Activated CD8-positive, alpha-beta memory T cell treated with anti-CD3 and anti-CD28 coated beads, Interleukin-2, amount 10 ng/mL, durations not matched to agents 7 days and 5 days (primary cell): ENCODE measurements at regions of chr9 and their contacts with region 1.

Region 1: DNA sequence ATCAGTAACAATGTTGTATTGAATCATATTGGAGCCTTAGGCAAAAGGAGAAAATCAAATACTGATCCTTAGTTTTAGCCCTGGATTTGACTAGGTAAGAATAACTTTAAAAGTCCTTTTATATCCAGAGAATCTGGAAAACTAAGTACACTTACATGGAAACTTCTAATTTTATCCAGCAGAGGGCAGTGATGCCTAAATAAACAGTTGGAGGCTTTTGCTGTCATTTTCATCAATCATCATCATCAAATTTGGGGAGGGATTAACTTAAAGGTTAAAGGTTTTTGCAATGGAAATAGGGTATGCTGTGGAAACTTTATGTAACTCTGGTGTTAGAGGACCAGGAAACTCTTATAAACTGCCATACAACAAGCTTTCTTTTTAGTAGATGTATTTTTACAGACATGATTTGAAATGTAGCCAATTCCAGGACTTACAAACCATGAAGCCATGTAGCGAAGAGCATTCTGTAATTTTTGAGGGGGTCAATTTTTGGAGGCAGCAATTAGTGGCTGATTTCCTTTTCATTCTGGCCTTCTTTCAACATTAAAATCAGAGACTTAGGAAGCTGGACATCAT is 112.7 kb downstream of the OSTF1 start:
- DNase-seq: no peak
- ATAC-seq: no peak
- H3K4me3 Mint-ChIP-seq: no peak overlapping the region
- H3K27ac Mint-ChIP-seq: no peak overlapping the region
- H3K4me1 Mint-ChIP-seq: no peaks in the 10 kb centered on the region
- H3K27me3 Mint-ChIP-seq: no peaks in the 10 kb centered on the region

Region 2: GRCh38 chr9:75088260-75088905 is 112.6 kb before region 1 on chr9 and contains the start of gene OSTF1:
- CTCF ChIA-PET with region 1: no interaction called
- DNase-seq: peak; percentile 95
- ATAC-seq: peak; percentile 89
- H3K4me3 Mint-ChIP-seq: peak within 1 kb of the TSS; percentile 93
- H3K27ac Mint-ChIP-seq: peak within 1 kb of the TSS; percentile 97
- H3K4me1 Mint-ChIP-seq: peaks cover 61% of the 10 kb centered on the region
- H3K27me3 Mint-ChIP-seq: no peaks in the 10 kb centered on the region
- total RNA-seq, gene OSTF1: 149 to 198 TPM

Region 3: DNA sequence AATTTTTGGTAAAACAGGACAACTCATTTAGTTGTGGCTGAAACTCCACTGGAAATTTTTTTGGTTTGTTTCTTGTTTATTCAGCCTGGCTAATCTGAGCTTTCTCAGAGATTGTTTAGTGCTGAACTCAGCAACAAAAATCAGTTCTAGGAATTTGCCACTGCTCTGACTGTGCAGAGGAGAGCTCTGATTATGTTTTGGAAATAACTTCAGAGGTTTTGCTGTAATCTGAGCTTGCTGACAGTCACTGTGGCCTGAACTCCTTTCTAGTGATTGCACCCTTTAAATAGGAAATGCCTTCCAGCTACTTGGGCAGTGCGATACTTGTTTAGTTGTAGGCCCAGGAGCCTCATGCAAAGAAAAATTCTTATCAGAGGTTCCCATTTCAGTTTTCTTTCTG is 52.4 kb before region 1 on chr9:
- CTCF ChIA-PET with region 1: no interaction called
- DNase-seq: peak; percentile 70
- ATAC-seq: peak; percentile 57
- H3K4me3 Mint-ChIP-seq: peak overlapping the region; percentile 43
- H3K27ac Mint-ChIP-seq: peak overlapping the region; percentile 94
- H3K4me1 Mint-ChIP-seq: peaks cover 88% of the 10 kb centered on the region
- H3K27me3 Mint-ChIP-seq: no peaks in the 10 kb centered on the region

Region 4: DNA sequence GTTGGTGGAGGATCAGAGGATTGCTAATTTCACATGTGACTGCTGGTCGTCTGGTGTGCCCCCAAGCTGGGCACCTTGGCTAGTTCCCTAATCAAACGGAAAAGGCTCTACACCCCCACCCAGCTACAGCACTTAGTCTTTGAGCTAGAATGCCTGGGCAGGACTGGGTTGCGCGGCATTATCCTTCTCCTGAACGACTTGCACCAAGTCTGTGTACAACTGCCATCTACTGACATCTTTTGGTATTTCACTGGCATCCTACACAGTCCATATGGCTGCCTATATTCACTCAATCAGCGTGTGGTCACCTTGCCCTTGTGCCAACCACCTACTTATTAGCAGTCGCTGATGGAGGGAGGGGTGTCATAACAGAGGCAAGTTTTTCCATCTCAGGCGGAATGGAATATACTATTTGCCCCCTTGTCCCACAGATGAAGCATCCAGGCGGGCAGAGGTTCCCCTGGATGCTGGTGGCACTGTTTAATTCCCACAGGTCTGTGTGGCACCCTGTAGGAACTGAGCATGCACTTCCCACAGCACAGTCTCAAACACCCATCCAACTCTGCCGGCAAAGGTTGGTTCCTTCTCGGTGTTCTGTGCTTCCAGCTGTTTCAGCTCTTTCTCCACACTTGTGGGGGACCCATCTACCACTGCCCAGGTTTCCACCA is 37.5 kb after region 1 on chr9:
- CTCF ChIA-PET with region 1: interaction called, 13 read pairs
- DNase-seq: peak; percentile 67
- ATAC-seq: peak; percentile 96
- H3K4me3 Mint-ChIP-seq: no peak overlapping the region
- H3K27ac Mint-ChIP-seq: no peak overlapping the region
- H3K4me1 Mint-ChIP-seq: peaks cover 3% of the 10 kb centered on the region
- H3K27me3 Mint-ChIP-seq: no peaks in the 10 kb centered on the region

Region 5: GRCh38 chr9:75455444-75455921 is 254.5 kb after region 1 on chr9:
- CTCF ChIA-PET with region 1: no interaction called
- DNase-seq: no peak
- ATAC-seq: no peak
- H3K4me3 Mint-ChIP-seq: no peak overlapping the region
- H3K27ac Mint-ChIP-seq: no peak overlapping the region
- H3K4me1 Mint-ChIP-seq: no peaks in the 10 kb centered on the region
- H3K27me3 Mint-ChIP-seq: no peaks in the 10 kb centered on the region